Calu3 (cell line): ENCODE measurements at regions of chr10 and their contacts with region 1.

Region 1: GRCh38 chr10:43078987-43079275 is 2.1 kb downstream of the RET start:
- DNase-seq: peak; percentile 60
- H3K4me3 Mint-ChIP-seq: no peak overlapping the region
- H3K27ac Mint-ChIP-seq: no peak overlapping the region
- H3K4me1 Mint-ChIP-seq: no peaks in the 10 kb centered on the region
- H3K27me3 Mint-ChIP-seq: peaks cover 90% of the 10 kb centered on the region
- CTCF ChIP-seq: peak; percentile 70

Region 2: GRCh38 chr10:42872865-42873643 is 205.9 kb before region 1 on chr10:
- CTCF ChIA-PET with region 1: no interaction called
- intact Hi-C with region 1: loop called (anchors 5 kb)
- DNase-seq: no peak
- H3K4me3 Mint-ChIP-seq: no peak overlapping the region
- H3K27ac Mint-ChIP-seq: no peak overlapping the region
- H3K4me1 Mint-ChIP-seq: no peaks in the 10 kb centered on the region
- H3K27me3 Mint-ChIP-seq: peaks cover 71% of the 10 kb centered on the region
- CTCF ChIP-seq: no peak

Region 3: GRCh38 chr10:43026011-43026973 is 52.6 kb before region 1 on chr10:
- CTCF ChIA-PET with region 1: interaction called, 3 read pairs
- intact Hi-C with region 1: loop called (anchors 5 kb)
- DNase-seq: peak; percentile 63
- H3K4me3 Mint-ChIP-seq: peak overlapping the region; percentile 61
- H3K27ac Mint-ChIP-seq: peak overlapping the region; percentile 16
- H3K4me1 Mint-ChIP-seq: peaks cover 12% of the 10 kb centered on the region
- H3K27me3 Mint-ChIP-seq: peaks cover 33% of the 10 kb centered on the region
- CTCF ChIP-seq: no peak